WTC11 (cell line): ENCODE measurements at regions of chr4 and their contacts with region 1.

Region 1: GRCh38 chr4:121696581-121697461 is at the start of gene ANXA5:
- DNase-seq: peak; percentile 79
- ATAC-seq: peak; percentile 93
- H3K4me3 Mint-ChIP-seq: peak within 1 kb of the TSS; percentile 94
- H3K27ac Mint-ChIP-seq: peak within 1 kb of the TSS; percentile 89
- H3K4me1 Mint-ChIP-seq: peaks cover 30% of the 10 kb centered on the region
- H3K27me3 Mint-ChIP-seq: peaks cover 9% of the 10 kb centered on the region; the same call in 1 of the 2 replicates
- CTCF ChIP-seq: no peak
- total RNA-seq, gene ANXA5: 169 to 186 TPM (median 176 TPM) in 3 replicates

Region 2: GRCh38 chr4:121599049-121599448 is 97.8 kb before region 1 on chr4:
- CTCF ChIA-PET with region 1: no interaction called
- POLR2A ChIA-PET with region 1: no interaction called
- DNase-seq: no peak
- ATAC-seq: no peak
- H3K4me3 Mint-ChIP-seq: no peak overlapping the region
- H3K27ac Mint-ChIP-seq: no peak overlapping the region
- H3K4me1 Mint-ChIP-seq: no peaks in the 10 kb centered on the region
- H3K27me3 Mint-ChIP-seq: no peaks in the 10 kb centered on the region
- CTCF ChIP-seq: no peak

Region 3: GRCh38 chr4:121711263-121712000 is 14.6 kb after region 1 on chr4:
- CTCF ChIA-PET with region 1: interaction called, 19 read pairs
- POLR2A ChIA-PET with region 1: interaction called, 9 read pairs
- DNase-seq: peak; percentile 83
- ATAC-seq: peak; percentile 99
- H3K4me3 Mint-ChIP-seq: peak overlapping the region; percentile 58
- H3K27ac Mint-ChIP-seq: peak overlapping the region; percentile 85
- H3K4me1 Mint-ChIP-seq: peaks cover 16% of the 10 kb centered on the region
- H3K27me3 Mint-ChIP-seq: no peaks in the 10 kb centered on the region
- CTCF ChIP-seq: no peak